Activated naive CD4-positive, alpha-beta T cell treated with anti-CD3 and anti-CD28 coated beads for 36 hours (primary cell): ENCODE measurements at regions of chr1 and their contacts with region 1.

Region 1: GRCh38 chr1:246329900-246330299 is 177.2 kb downstream of the SMYD3 start:
- DNase-seq: peak; percentile 65
- H3K4me3 Mint-ChIP-seq: no peak overlapping the region
- H3K27ac Mint-ChIP-seq: peak overlapping the region; percentile 67
- H3K4me1 Mint-ChIP-seq: peaks cover 54% of the 10 kb centered on the region
- H3K27me3 Mint-ChIP-seq: no peaks in the 10 kb centered on the region

Region 2: GRCh38 chr1:244652699-244653466 is 1677.0 kb before region 1 on chr1 and contains the start of gene DESI2:
- CTCF ChIA-PET with region 1: no interaction called
- intact Hi-C with region 1: loop called (anchors 10 kb)
- DNase-seq: peak; percentile 99
- H3K4me3 Mint-ChIP-seq: peak within 1 kb of the TSS; percentile 82
- H3K27ac Mint-ChIP-seq: peak within 1 kb of the TSS; percentile 88
- H3K4me1 Mint-ChIP-seq: peaks cover 18% of the 10 kb centered on the region
- H3K27me3 Mint-ChIP-seq: no peaks in the 10 kb centered on the region
- total RNA-seq, gene DESI2: 31.7 to 32.5 TPM

Region 3: DNA sequence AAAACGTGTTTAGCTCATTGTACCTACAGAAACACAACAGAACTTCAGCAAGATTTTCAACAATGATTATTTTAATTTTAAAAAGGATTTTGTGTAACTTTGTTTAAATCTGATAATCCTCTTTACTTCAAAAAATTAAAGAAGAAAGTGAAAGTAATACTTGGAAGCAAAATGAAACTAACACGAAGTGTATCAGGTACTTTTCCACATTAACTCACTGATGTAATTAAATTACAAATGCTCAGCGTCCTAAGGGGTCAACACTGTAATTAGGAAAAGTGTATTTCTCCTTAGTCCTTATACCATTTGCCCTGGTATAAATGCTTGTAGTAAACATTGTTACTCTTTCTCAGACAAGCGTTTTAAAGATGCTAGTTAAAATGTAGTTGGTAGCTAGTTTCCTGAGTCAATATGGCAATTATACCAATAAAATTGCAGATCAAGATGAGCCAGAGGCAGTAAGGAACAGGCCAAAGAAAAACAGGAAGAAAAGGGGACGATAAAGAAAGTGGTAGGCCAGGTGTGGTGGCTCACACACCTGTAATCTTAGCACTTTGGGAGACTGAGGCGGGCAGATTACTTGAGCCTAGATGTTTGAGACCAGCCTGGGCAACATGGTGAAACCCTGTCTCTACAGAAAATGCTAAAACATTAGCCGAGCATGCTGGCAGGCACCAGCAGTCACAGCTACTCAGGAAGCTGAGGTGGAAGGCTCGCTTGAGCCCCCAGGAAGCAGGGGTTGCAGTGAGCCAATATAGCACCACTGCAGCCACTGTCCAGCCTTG is 375.8 kb before region 1 on chr1:
- CTCF ChIA-PET with region 1: no interaction called
- intact Hi-C with region 1: loop called (anchors 1 kb)
- DNase-seq: peak; percentile 17
- H3K4me3 Mint-ChIP-seq: peak overlapping the region; percentile 54
- H3K27ac Mint-ChIP-seq: peak overlapping the region; percentile 87
- H3K4me1 Mint-ChIP-seq: peaks cover 27% of the 10 kb centered on the region
- H3K27me3 Mint-ChIP-seq: no peaks in the 10 kb centered on the region

Region 4: DNA sequence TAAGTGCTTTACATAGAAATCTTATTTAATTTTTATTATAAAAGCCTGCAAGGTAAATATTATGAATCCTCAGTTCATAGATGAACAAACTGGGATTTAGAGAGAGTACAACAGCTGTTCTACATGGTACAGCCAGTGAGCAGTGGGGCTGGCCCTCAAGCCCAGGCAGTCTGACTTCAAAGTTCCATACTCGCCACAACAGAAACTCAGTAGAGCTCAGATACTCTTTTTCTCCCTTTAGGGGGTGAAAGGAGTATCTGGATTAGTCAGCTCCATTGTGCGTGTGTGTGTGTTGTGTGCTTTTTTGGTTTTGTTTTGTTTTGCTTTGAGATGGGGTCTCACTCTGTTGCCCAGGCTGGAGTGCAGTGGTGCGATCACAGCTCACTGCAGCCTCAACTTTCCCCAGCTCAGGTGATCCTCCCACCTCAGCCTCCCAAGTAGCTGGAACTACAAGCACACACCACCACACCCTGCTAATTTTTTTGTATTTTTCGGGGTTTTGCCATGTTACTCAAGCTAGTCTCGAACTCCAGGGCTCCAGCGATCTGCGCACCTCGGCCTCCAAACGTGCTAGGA is 201.3 kb before region 1 on chr1:
- CTCF ChIA-PET with region 1: interaction called, 3 read pairs
- intact Hi-C with region 1: loop called (anchors 1 kb)
- DNase-seq: peak; percentile 24
- H3K4me3 Mint-ChIP-seq: no peak overlapping the region
- H3K27ac Mint-ChIP-seq: no peak overlapping the region
- H3K4me1 Mint-ChIP-seq: peaks cover 2% of the 10 kb centered on the region
- H3K27me3 Mint-ChIP-seq: no peaks in the 10 kb centered on the region

Region 5: GRCh38 chr1:246280551-246280950 is 49.3 kb before region 1 on chr1:
- CTCF ChIA-PET with region 1: no interaction called
- intact Hi-C with region 1: no loop called
- DNase-seq: peak; percentile 7
- H3K4me3 Mint-ChIP-seq: no peak overlapping the region
- H3K27ac Mint-ChIP-seq: no peak overlapping the region
- H3K4me1 Mint-ChIP-seq: peaks cover 3% of the 10 kb centered on the region
- H3K27me3 Mint-ChIP-seq: no peaks in the 10 kb centered on the region

Region 6: DNA sequence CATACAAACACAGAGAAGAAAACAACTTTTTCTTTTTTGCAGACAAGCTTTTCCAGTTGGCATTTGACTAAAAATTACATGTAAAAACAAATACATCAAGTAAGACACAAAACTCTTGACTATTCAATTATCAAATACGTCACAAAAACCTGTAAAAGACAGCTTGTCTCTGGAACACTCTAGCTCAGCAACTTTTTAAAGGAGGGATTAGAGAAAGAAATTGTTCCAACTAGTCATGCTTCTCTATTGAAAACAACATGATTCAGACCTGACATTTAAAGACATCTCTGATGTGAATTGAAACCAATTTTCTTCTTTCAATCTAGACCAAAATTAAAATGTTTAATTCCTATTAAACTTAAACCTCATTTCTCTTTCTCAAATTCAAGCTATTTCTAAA is 146.9 kb after region 1 on chr1:
- CTCF ChIA-PET with region 1: no interaction called
- intact Hi-C with region 1: loop called (anchors 1 kb)
- DNase-seq: no peak
- H3K4me3 Mint-ChIP-seq: no peak overlapping the region
- H3K27ac Mint-ChIP-seq: no peak overlapping the region
- H3K4me1 Mint-ChIP-seq: peaks cover 20% of the 10 kb centered on the region
- H3K27me3 Mint-ChIP-seq: no peaks in the 10 kb centered on the region

Region 7: GRCh38 chr1:247407180-247407616 is 1077.3 kb after region 1 on chr1:
- CTCF ChIA-PET with region 1: no interaction called
- intact Hi-C with region 1: loop called (anchors 1 kb)
- DNase-seq: peak; percentile 73
- H3K4me3 Mint-ChIP-seq: no peak overlapping the region
- H3K27ac Mint-ChIP-seq: no peak overlapping the region
- H3K4me1 Mint-ChIP-seq: peaks cover 42% of the 10 kb centered on the region
- H3K27me3 Mint-ChIP-seq: peaks cover 3% of the 10 kb centered on the region